ENCODE measurements at regions of chr14 and their contacts with region 1.

Region 1: DNA sequence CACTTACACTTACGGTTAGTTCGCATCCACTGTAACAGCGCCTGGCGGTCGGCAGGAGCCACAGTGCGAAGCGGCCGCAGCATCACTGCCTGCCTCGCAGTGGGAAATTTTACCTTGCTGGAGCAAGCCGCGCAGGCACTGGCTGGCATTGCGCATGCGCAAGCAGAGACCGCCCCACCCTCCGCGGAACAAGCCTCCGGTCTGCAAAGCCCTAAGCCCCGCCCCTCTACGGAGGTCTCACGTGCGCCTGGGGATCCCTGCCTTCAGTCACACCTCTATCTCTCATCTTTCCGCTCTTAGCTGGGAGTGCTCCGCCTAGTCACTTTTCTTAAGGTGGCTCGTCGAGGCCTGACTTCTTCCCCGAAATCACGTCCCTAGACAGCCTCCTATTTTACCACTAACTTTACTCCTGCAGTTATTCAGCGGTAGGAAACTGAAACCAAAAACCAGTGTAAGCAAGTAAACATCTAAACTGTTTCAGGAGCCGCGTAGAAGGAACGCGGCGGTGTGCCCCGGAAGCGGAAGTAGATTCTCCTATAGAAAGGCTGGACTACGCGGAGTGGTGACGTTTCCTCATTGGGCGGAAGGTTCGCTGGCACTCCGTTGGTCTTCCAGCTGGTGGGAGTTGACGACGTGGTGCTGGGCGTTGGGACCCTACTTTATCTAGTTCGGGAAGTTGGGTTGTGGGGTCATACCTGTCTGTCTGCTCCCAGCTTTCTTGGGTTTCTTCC is at the start of gene SRP54:
- DNase-seq: peak; percentile 97
- ATAC-seq: peak; percentile 91
- H3K4me3 Mint-ChIP-seq: no peak within 1 kb of the TSS
- H3K27ac Mint-ChIP-seq: no peak within 1 kb of the TSS
- H3K4me1 Mint-ChIP-seq: peaks cover 22% of the 10 kb centered on the region
- H3K27me3 Mint-ChIP-seq: no peaks in the 10 kb centered on the region
- CTCF ChIP-seq: no peak
- total RNA-seq, gene SRP54: 51.2 and 54.7 TPM in 2 replicates

Region 2: GRCh38 chr14:34539407-34540180 is 443.0 kb before region 1 on chr14 and contains the start of gene EAPP:
- CTCF ChIA-PET with region 1: no interaction called
- POLR2A ChIA-PET with region 1: no interaction called
- intact Hi-C with region 1: loop called (anchors 5 kb)
- DNase-seq: peak; percentile 86
- ATAC-seq: peak; percentile 99
- H3K4me3 Mint-ChIP-seq: peak within 1 kb of the TSS; percentile 99
- H3K27ac Mint-ChIP-seq: peak within 1 kb of the TSS; percentile 97
- H3K4me1 Mint-ChIP-seq: peaks cover 34% of the 10 kb centered on the region
- H3K27me3 Mint-ChIP-seq: no peaks in the 10 kb centered on the region
- CTCF ChIP-seq: no peak
- total RNA-seq, gene EAPP: 40.7 and 43.2 TPM in 2 replicates

Region 3: GRCh38 chr14:34671716-34672115 is 310.9 kb before region 1 on chr14:
- CTCF ChIA-PET with region 1: no interaction called
- POLR2A ChIA-PET with region 1: no interaction called
- intact Hi-C with region 1: loop called (anchors 5 kb)
- DNase-seq: no peak
- ATAC-seq: no peak
- H3K4me3 Mint-ChIP-seq: no peak overlapping the region
- H3K27ac Mint-ChIP-seq: no peak overlapping the region
- H3K4me1 Mint-ChIP-seq: no peaks in the 10 kb centered on the region
- H3K27me3 Mint-ChIP-seq: no peaks in the 10 kb centered on the region
- CTCF ChIP-seq: no peak

Region 4: GRCh38 chr14:34875031-34875922 is 107.3 kb before region 1 on chr14 and contains the start of gene BAZ1A:
- CTCF ChIA-PET with region 1: interaction called, 4 read pairs
- POLR2A ChIA-PET with region 1: interaction called, 54 read pairs
- intact Hi-C with region 1: loop called (anchors 1 kb)
- DNase-seq: peak; percentile 63
- ATAC-seq: peak; percentile 12
- H3K4me3 Mint-ChIP-seq: peak within 1 kb of the TSS; percentile 100
- H3K27ac Mint-ChIP-seq: peak within 1 kb of the TSS; percentile 99
- H3K4me1 Mint-ChIP-seq: peaks cover 35% of the 10 kb centered on the region
- H3K27me3 Mint-ChIP-seq: no peaks in the 10 kb centered on the region
- CTCF ChIP-seq: no peak
- total RNA-seq, gene BAZ1A: 45.3 and 55.9 TPM in 2 replicates

Region 5: GRCh38 chr14:35121887-35122695 is 139.5 kb after region 1 on chr14 and contains the starts of genes PPP2R3C and PRORP:
- CTCF ChIA-PET with region 1: no interaction called
- POLR2A ChIA-PET with region 1: interaction called, 16 read pairs
- intact Hi-C with region 1: loop called (anchors 1 kb)
- DNase-seq: peak; percentile 82
- ATAC-seq: peak; percentile 88
- H3K4me3 Mint-ChIP-seq: peak within 1 kb of the TSS; percentile 99
- H3K27ac Mint-ChIP-seq: peak within 1 kb of the TSS; percentile 100
- H3K4me1 Mint-ChIP-seq: peaks cover 49% of the 10 kb centered on the region
- H3K27me3 Mint-ChIP-seq: no peaks in the 10 kb centered on the region
- CTCF ChIP-seq: no peak
- total RNA-seq, gene PPP2R3C: 46.0 and 48.9 TPM in 2 replicates
- total RNA-seq, gene PRORP: 22.8 and 25.6 TPM in 2 replicates

Region 6: GRCh38 chr14:35292051-35292769 is 309.6 kb after region 1 on chr14 and contains the start of gene PSMA6:
- CTCF ChIA-PET with region 1: no interaction called
- POLR2A ChIA-PET with region 1: interaction called, 15 read pairs
- intact Hi-C with region 1: loop called (anchors 1 kb)
- DNase-seq: peak; percentile 93
- ATAC-seq: peak; percentile 97
- H3K4me3 Mint-ChIP-seq: peak within 1 kb of the TSS; percentile 99
- H3K27ac Mint-ChIP-seq: peak within 1 kb of the TSS; percentile 96
- H3K4me1 Mint-ChIP-seq: peaks cover 61% of the 10 kb centered on the region
- H3K27me3 Mint-ChIP-seq: no peaks in the 10 kb centered on the region
- CTCF ChIP-seq: no peak
- total RNA-seq, gene PSMA6: 163 and 180 TPM in 2 replicates

Region 7: GRCh38 chr14:35826218-35826951 is 843.8 kb after region 1 on chr14 and contains the start of gene BRMS1L:
- CTCF ChIA-PET with region 1: no interaction called
- POLR2A ChIA-PET with region 1: no interaction called
- intact Hi-C with region 1: loop called (anchors 1 kb)
- DNase-seq: peak; percentile 90
- ATAC-seq: peak; percentile 96
- H3K4me3 Mint-ChIP-seq: peak within 1 kb of the TSS; percentile 87
- H3K27ac Mint-ChIP-seq: peak within 1 kb of the TSS; percentile 92
- H3K4me1 Mint-ChIP-seq: peaks cover 19% of the 10 kb centered on the region
- H3K27me3 Mint-ChIP-seq: no peaks in the 10 kb centered on the region
- CTCF ChIP-seq: no peak
- total RNA-seq, gene BRMS1L: 3.7 and 4.4 TPM in 2 replicates

Measured in activated B cell treated with CpG ODN at 0.5 μM for 24 hours (primary cell).